Activated naive CD8-positive, alpha-beta T cell treated with anti-CD3 and anti-CD28 coated beads, Interleukin-2, amount 10 ng/mL, durations not matched to agents 7 days and 5 days (primary cell): ENCODE measurements at regions of chr15 and their contacts with region 1.

Region 1: DNA sequence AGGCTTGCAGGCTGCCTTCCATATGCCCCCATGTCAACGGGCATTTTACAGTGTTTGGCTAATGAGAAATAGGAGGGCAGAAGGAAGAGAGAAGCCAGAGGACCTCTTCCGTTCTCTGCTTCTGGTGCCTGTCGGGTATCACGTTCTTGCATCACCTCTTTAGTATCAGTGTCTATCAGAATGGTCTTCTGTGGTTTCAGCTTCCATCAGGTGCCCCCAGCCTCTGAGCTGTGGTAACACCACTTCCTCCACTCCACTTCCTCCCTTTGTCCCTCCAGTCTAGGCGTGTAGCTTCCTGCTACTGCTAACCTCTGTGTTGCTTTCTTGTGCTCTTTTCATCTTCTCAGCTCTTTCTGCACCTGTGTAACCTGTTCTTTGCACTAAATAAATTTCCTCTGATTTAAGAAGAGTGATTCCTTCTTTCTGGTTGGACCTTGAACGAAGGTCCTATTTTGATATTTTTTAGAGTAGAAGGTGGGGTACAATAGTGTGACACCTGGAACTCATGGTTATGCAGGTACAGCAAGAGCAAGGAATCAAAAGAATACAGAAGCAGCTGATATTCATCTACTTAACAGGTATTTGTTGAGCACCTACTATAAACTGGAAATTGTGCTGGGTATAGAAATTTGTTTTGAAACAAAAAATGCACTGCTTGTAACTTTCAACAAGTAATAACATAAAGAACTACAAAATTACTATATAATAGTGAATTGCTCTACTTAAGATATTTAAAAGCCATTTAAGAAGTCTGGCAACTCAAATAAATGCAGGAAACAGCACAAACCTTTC is 27.4 kb upstream of the FOXB1 start:
- DNase-seq: peak; percentile 66
- ATAC-seq: peak; percentile 96
- H3K4me3 Mint-ChIP-seq: peak overlapping the region; percentile 76
- H3K27ac Mint-ChIP-seq: peak overlapping the region; percentile 94
- H3K4me1 Mint-ChIP-seq: peaks cover 29% of the 10 kb centered on the region
- H3K27me3 Mint-ChIP-seq: peaks cover 3% of the 10 kb centered on the region

Region 2: GRCh38 chr15:59917504-59918157 is 59.0 kb before region 1 on chr15:
- POLR2A ChIA-PET with region 1: interaction called, 12 read pairs
- DNase-seq: peak; percentile 73
- ATAC-seq: peak; percentile 79
- H3K4me3 Mint-ChIP-seq: no peak overlapping the region
- H3K27ac Mint-ChIP-seq: peak overlapping the region; percentile 82
- H3K4me1 Mint-ChIP-seq: peaks cover 26% of the 10 kb centered on the region
- H3K27me3 Mint-ChIP-seq: peaks cover 15% of the 10 kb centered on the region

Region 3: GRCh38 chr15:60086681-60087429 is 110.2 kb after region 1 on chr15:
- POLR2A ChIA-PET with region 1: no interaction called
- DNase-seq: no peak
- ATAC-seq: no peak
- H3K4me3 Mint-ChIP-seq: no peak overlapping the region
- H3K27ac Mint-ChIP-seq: no peak overlapping the region
- H3K4me1 Mint-ChIP-seq: no peaks in the 10 kb centered on the region
- H3K27me3 Mint-ChIP-seq: peaks cover 15% of the 10 kb centered on the region

Region 4: GRCh38 chr15:60115579-60116380 is 139.1 kb after region 1 on chr15:
- POLR2A ChIA-PET with region 1: interaction called, 10 read pairs
- DNase-seq: no peak
- ATAC-seq: no peak
- H3K4me3 Mint-ChIP-seq: no peak overlapping the region
- H3K27ac Mint-ChIP-seq: no peak overlapping the region
- H3K4me1 Mint-ChIP-seq: peaks cover 8% of the 10 kb centered on the region
- H3K27me3 Mint-ChIP-seq: peaks cover 9% of the 10 kb centered on the region